Activated CD4-positive, alpha-beta T cell treated with anti-CD3 and anti-CD28 coated beads, Interleukin-2, amount 10 ng/mL, durations not matched to agents 7 days and 5 days (primary cell): ENCODE measurements at regions of chr10 and their contacts with region 1.

Region 1: GRCh38 chr10:28663576-28664313 is 13.6 kb upstream of the BAMBI start:
- DNase-seq: peak; percentile 75
- H3K4me3 Mint-ChIP-seq: no peak overlapping the region
- H3K27ac Mint-ChIP-seq: no peak overlapping the region
- H3K4me1 Mint-ChIP-seq: peaks cover 7% of the 10 kb centered on the region
- H3K27me3 Mint-ChIP-seq: peaks cover 39% of the 10 kb centered on the region

Region 2: GRCh38 chr10:28628184-28628893 is 35.4 kb before region 1 on chr10:
- CTCF ChIA-PET with region 1: interaction called, 11 read pairs
- POLR2A ChIA-PET with region 1: no interaction called
- DNase-seq: peak; percentile 75
- H3K4me3 Mint-ChIP-seq: no peak overlapping the region
- H3K27ac Mint-ChIP-seq: no peak overlapping the region
- H3K4me1 Mint-ChIP-seq: no peaks in the 10 kb centered on the region
- H3K27me3 Mint-ChIP-seq: peaks cover 10% of the 10 kb centered on the region

Region 3: DNA sequence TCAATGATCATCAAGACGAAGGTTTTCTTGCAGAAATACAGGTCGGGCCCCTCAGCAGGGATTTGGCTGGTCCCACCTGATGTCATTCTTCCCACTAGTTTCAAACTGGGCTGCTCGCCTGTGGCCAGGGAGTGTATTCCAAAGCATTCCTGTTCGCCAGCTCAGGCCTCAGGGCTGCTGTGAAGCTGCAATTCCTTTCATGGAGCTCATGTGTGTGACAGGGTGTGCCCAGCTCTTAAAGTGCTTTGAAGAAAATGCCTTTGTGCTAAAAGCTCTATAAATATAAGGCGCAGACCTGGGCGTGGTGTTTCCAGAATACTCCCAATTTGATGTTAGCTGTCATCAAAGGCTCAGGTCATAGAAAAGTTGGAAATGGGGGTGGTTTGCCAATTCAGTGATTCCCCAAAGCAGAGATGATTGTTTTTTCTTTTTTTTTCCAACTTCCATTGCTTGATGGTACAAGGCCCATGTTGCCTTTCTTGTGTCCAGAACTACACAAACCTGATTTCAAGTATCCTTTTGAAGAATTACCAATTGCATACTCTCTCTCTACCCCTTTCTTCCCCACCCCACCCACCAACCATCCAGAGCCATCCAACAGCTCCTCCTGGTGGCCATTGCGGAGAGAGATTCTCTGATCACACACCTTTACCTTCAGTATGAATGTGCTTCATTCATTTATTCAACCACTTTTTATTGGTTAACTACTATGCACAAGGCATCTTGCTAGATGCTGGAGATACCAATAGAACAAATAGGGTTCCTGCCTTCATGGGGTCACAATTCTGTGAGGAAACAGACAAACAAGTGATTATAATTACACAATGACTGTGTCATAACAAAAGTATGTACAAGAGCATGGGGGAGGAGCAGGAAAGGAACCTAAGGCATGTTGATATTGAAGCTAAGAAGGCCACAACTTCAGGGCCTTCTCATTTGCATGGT is 327.9 kb after region 1 on chr10:
- CTCF ChIA-PET with region 1: interaction called, 10 read pairs
- POLR2A ChIA-PET with region 1: no interaction called
- DNase-seq: peak; percentile 37
- H3K4me3 Mint-ChIP-seq: no peak overlapping the region
- H3K27ac Mint-ChIP-seq: no peak overlapping the region
- H3K4me1 Mint-ChIP-seq: no peaks in the 10 kb centered on the region
- H3K27me3 Mint-ChIP-seq: peaks cover 2% of the 10 kb centered on the region